ENCODE measurements at regions of chr1 and their contacts with region 1.

Region 1: GRCh38 chr1:19390901-19391595 is 78.9 kb downstream of the SLC66A1 start:
- DNase-seq: peak; percentile 46
- H3K4me3 Mint-ChIP-seq: peak overlapping the region; percentile 76
- H3K27ac Mint-ChIP-seq: peak overlapping the region; percentile 88
- H3K4me1 Mint-ChIP-seq: peaks cover 52% of the 10 kb centered on the region
- H3K27me3 Mint-ChIP-seq: no peaks in the 10 kb centered on the region

Region 2: DNA sequence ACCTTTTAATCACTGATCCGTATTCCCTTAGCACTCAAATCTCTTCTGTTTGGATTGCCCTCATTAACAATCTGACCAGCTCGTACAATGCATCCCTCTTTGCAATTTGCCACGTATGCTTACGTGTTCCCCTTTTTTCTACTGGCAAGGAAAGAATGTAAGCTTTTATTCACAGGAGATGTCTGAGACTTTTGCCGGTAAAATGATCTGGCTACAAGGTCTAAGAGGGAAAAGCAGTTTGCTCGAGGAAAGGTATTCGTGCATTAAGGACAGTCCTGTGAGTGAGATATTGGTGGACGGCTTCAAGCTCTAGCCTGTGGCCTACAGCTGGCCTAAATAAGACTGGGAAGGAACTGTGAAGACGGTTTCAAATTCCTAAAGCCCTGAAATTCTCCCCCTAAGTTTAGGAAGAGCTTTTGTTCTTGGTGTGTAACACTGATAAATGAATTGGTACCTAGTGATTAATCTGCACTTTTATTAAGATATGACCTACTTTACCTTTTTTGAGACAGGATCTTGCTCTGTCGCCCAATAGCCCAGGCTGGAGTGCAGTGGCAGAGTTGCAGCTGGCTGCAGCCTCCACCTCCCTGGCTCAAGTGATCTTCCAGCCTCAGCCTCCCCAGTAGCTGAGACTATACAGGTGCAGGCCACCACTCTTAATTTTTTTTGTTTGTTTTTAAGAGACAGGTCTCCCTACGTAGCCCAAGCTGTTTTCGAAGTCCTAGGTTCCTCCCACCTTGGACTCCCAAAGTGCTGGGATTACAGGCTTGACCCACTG is 180.1 kb before region 1 on chr1:
- intact Hi-C with region 1: no loop called
- DNase-seq: no peak
- H3K4me3 Mint-ChIP-seq: peak overlapping the region; percentile 94
- H3K27ac Mint-ChIP-seq: peak overlapping the region; percentile 98
- H3K4me1 Mint-ChIP-seq: peaks cover 59% of the 10 kb centered on the region
- H3K27me3 Mint-ChIP-seq: no peaks in the 10 kb centered on the region

Region 3: GRCh38 chr1:19374083-19374801 is 16.8 kb before region 1 on chr1:
- intact Hi-C with region 1: no loop called
- DNase-seq: no peak
- H3K4me3 Mint-ChIP-seq: no peak overlapping the region
- H3K27ac Mint-ChIP-seq: no peak overlapping the region
- H3K4me1 Mint-ChIP-seq: peaks cover 8% of the 10 kb centered on the region
- H3K27me3 Mint-ChIP-seq: no peaks in the 10 kb centered on the region

Region 4: DNA sequence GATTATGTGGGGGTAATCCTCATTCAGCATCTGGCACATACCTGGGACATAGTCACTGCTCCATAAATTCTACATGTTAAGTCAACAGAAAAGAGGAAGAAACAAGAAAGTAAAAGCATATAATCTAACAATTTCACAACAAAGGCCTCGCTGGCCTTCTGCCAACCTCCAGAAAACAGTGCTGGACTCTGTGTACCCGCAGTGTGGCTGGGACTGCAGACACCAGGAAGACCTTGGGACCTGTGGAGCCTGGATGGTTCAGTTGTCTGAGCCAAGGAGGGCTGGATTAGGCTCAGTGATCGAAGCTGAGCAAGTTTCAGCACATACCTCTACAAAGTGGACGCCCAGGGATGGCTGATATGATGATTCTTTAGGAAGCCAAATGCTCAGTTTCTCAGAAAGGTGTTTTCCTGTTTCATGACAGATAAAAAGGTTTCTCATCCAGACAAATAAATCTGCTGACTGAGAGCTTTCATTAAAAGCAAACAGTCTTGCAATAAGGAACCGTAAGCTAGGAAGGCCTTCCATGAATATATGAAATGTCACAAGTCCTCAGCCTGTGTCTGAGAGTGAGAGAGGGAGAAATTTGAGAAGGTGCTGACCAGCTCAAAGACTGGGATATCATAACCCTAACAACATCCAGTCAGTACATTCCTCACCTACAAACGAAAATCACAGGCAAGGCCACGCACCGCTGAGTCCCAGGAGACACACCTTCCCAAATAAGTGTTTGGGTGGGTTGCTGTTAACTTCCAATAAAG is 45.8 kb after region 1 on chr1:
- intact Hi-C with region 1: loop called (anchors 2 kb)
- DNase-seq: no peak
- H3K4me3 Mint-ChIP-seq: peak overlapping the region; percentile 30
- H3K27ac Mint-ChIP-seq: peak overlapping the region; percentile 83
- H3K4me1 Mint-ChIP-seq: peaks cover 81% of the 10 kb centered on the region
- H3K27me3 Mint-ChIP-seq: no peaks in the 10 kb centered on the region

Region 5: GRCh38 chr1:19582302-19582701 is 191.3 kb after region 1 on chr1:
- intact Hi-C with region 1: loop called (anchors 1 kb)
- DNase-seq: peak; percentile 54
- H3K4me3 Mint-ChIP-seq: no peak overlapping the region
- H3K27ac Mint-ChIP-seq: peak overlapping the region; percentile 25
- H3K4me1 Mint-ChIP-seq: peaks cover 7% of the 10 kb centered on the region
- H3K27me3 Mint-ChIP-seq: peaks cover 24% of the 10 kb centered on the region

Region 6: DNA sequence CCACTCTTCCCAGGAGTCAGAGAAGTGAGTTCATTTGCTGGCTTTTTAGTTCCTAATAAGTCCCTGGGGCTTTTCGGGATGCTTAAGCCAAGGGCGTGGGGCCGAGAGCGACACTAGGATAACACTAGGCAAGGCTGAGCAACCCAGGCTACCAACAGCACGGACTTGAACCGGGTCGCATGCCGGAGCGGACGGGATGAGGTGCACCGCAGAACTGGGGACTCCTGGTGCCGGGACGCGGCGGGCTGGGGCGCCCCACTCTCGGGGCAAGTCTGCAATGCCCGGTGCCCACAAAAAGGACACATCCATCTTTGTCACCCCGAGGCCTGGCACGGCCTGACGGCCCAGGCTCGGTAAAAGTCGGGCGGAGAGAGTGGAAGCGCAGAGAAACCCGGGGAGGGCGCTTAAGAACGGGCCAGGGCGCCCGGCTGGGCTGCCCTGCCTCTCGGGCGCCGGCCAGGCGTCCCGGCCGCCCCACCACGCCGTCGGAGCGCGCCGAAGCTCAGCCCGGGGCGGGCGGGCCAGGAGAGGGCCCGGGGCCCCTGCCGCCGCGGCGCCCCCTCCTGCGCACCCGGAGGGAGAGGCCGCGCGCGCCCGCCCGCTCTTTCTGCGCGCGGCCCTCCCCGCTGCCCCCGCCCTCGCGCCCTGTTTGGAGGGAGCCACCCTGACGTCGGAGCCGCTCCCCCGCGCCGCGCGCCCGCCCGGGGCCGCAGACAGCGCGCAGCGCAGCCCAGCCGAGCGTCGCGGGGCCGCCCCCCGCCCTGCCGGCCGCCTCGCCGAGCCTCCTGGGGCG is 252.8 kb after region 1 on chr1 and contains the start of gene NBL1:
- intact Hi-C with region 1: loop called (anchors 2 kb)
- DNase-seq: peak; percentile 75
- H3K4me3 Mint-ChIP-seq: peak within 1 kb of the TSS; percentile 94
- H3K27ac Mint-ChIP-seq: peak within 1 kb of the TSS; percentile 95
- H3K4me1 Mint-ChIP-seq: peaks cover 33% of the 10 kb centered on the region
- H3K27me3 Mint-ChIP-seq: peaks cover 24% of the 10 kb centered on the region
- total RNA-seq, gene NBL1: 53.0 and 55.5 TPM in 2 replicates

Region 7: GRCh38 chr1:19651141-19651737 is 260.2 kb after region 1 on chr1:
- intact Hi-C with region 1: loop called (anchors 1 kb)
- DNase-seq: no peak
- H3K4me3 Mint-ChIP-seq: no peak overlapping the region
- H3K27ac Mint-ChIP-seq: no peak overlapping the region
- H3K4me1 Mint-ChIP-seq: peaks cover 27% of the 10 kb centered on the region
- H3K27me3 Mint-ChIP-seq: no peaks in the 10 kb centered on the region

Region 8: GRCh38 chr1:19661721-19662228 is 270.7 kb after region 1 on chr1:
- intact Hi-C with region 1: loop called (anchors 2 kb)
- DNase-seq: no peak
- H3K4me3 Mint-ChIP-seq: no peak overlapping the region
- H3K27ac Mint-ChIP-seq: no peak overlapping the region
- H3K4me1 Mint-ChIP-seq: peaks cover 12% of the 10 kb centered on the region
- H3K27me3 Mint-ChIP-seq: peaks cover 41% of the 10 kb centered on the region